ENCODE measurements at regions of chr20 and their contacts with region 1.

Region 1: GRCh38 chr20:59403261-59403961 is 103.0 kb downstream of the EDN3 start:
- DNase-seq: no peak
- H3K4me3 ChIP-seq: peak overlapping the region in 2 of 4 donors; percentile 18 to 51
- H3K27ac ChIP-seq: peak overlapping the region in 3 of 4 donors; percentile 41 to 63 (median 58)
- H3K4me1 ChIP-seq: peaks cover 13 to 54% (median 14%) of the 10 kb centered on the region in 3 donors
- H3K27me3 ChIP-seq: peaks cover 0 to 83% (median 14%) of the 10 kb centered on the region in 4 donors
- CTCF ChIP-seq: peak; percentile 88 to 99 (median 96)
- POLR2A ChIP-seq: no peak

Region 2: DNA sequence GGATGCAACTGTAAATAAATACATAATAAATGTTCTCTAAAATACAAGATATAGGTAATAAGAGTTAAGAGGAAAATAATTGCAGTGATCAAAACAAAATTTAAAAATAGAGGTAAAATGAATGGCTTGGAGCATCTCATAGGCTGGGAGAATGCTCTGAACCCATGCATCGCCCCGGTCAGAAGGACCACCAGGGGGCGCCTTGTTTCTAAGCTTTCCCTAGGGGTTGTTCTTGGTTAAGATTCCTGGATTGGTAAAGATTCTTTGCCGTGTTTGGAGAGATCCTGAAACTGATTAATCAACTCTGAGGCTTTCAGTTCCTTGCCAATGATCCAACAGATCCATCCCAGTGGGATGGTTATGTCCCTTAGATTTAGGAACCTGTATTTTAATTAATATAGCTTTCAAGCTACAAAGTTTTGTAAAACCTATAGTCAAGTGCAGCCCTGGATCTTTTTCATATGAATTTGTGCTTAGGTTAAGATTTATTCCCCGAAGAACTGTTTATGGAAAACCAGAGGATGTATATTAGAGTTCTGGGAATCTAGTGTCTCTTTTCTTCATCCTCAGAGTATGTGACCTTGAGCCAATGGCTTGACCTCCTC is 315.5 kb before region 1 on chr20:
- intact Hi-C with region 1: loop called (anchors 5 kb)
- DNase-seq: peak; percentile 7
- H3K4me3 ChIP-seq: no peak overlapping the region
- H3K27ac ChIP-seq: no peak overlapping the region
- H3K4me1 ChIP-seq: peaks cover 0 to 15% (median 4%) of the 10 kb centered on the region in 3 donors
- H3K27me3 ChIP-seq: no peaks in the 10 kb centered on the region
- CTCF ChIP-seq: peak; percentile 87 to 96 (median 90)
- POLR2A ChIP-seq: no peak

Region 3: DNA sequence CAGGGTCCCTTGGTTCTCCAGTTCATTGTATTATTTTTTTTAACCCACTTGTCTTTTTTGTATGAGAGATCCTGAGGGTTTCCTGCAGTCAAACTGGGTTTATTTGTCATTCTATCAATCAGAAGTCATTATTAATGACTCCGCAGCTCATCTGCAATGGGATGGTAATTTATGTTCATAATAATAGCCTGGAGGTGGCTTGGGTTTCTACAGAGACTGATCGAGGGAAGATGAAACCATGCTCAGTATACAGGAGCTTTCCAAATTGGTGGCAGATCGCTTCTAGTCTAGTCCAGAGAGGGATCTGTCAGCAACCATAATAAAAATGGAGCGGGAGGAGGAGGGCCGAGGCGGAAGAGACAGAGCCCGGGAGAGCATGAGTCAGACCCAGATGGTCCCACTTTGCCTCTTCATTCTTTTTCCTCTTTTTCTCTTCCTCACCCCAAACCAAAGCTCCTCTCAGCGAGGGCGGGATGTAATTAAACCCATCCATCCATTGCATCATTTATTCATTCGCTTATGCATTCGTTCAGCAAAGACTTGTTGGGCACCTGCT is 80.4 kb before region 1 on chr20:
- intact Hi-C with region 1: no loop called
- DNase-seq: no peak
- H3K4me3 ChIP-seq: no peak overlapping the region
- H3K27ac ChIP-seq: no peak overlapping the region
- H3K4me1 ChIP-seq: peaks cover 0 to 14% (median 0%) of the 10 kb centered on the region in 3 donors
- H3K27me3 ChIP-seq: peaks cover 0 to 4% (median 0%) of the 10 kb centered on the region in 4 donors
- CTCF ChIP-seq: no peak
- POLR2A ChIP-seq: no peak